Activated CD4-positive, alpha-beta memory T cell treated with anti-CD3 and anti-CD28 coated beads, Interleukin-2, amount 10 ng/mL, durations not matched to agents 7 days and 5 days (primary cell): ENCODE measurements at regions of chr12 and their contacts with region 1.

Region 1: GRCh38 chr12:122336015-122336946 is 70.0 kb upstream of the VPS33A start:
- DNase-seq: peak; percentile 55
- H3K4me3 Mint-ChIP-seq: no peak overlapping the region
- H3K27ac Mint-ChIP-seq: peak overlapping the region; percentile 53
- H3K4me1 Mint-ChIP-seq: peaks cover 18% of the 10 kb centered on the region
- H3K27me3 Mint-ChIP-seq: no peaks in the 10 kb centered on the region

Region 2: GRCh38 chr12:122322501-122322900 is 13.8 kb before region 1 on chr12:
- CTCF ChIA-PET with region 1: interaction called, 21 read pairs
- POLR2A ChIA-PET with region 1: no interaction called
- DNase-seq: no peak
- H3K4me3 Mint-ChIP-seq: no peak overlapping the region
- H3K27ac Mint-ChIP-seq: no peak overlapping the region
- H3K4me1 Mint-ChIP-seq: peaks cover 19% of the 10 kb centered on the region
- H3K27me3 Mint-ChIP-seq: no peaks in the 10 kb centered on the region

Region 3: GRCh38 chr12:122356192-122356635 is 19.9 kb after region 1 on chr12:
- CTCF ChIA-PET with region 1: interaction called, 27 read pairs
- POLR2A ChIA-PET with region 1: no interaction called
- DNase-seq: peak; percentile 60
- H3K4me3 Mint-ChIP-seq: no peak overlapping the region
- H3K27ac Mint-ChIP-seq: no peak overlapping the region
- H3K4me1 Mint-ChIP-seq: peaks cover 7% of the 10 kb centered on the region
- H3K27me3 Mint-ChIP-seq: no peaks in the 10 kb centered on the region

Region 4: DNA sequence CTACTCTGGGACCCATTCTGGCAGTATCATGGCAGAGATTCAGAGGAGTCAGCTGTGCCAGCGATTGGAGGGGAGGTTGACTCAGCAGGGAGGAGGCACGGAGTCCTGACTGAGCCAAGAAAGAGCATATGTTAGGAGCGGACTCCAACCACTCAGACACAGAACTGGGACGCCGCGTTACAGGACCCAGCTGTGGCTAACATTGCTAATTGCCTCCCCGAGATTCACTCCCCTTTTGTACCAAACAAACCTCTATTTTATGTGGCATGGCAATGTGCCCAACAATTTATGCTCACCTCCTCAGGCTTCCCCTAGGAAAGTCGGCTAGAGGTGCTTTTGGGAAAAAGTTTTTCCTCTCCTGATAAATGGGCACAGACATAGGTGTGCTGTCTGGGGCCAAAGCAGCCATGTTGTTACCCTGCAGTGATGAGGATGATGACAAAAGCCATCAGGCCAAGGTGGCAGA is 101.4 kb after region 1 on chr12:
- CTCF ChIA-PET with region 1: no interaction called
- POLR2A ChIA-PET with region 1: no interaction called
- DNase-seq: no peak
- H3K4me3 Mint-ChIP-seq: no peak overlapping the region
- H3K27ac Mint-ChIP-seq: no peak overlapping the region
- H3K4me1 Mint-ChIP-seq: no peaks in the 10 kb centered on the region
- H3K27me3 Mint-ChIP-seq: no peaks in the 10 kb centered on the region

Region 5: GRCh38 chr12:122471324-122472226 is 135.3 kb after region 1 on chr12:
- CTCF ChIA-PET with region 1: interaction called, 17 read pairs
- POLR2A ChIA-PET with region 1: no interaction called
- DNase-seq: no peak
- H3K4me3 Mint-ChIP-seq: no peak overlapping the region
- H3K27ac Mint-ChIP-seq: no peak overlapping the region
- H3K4me1 Mint-ChIP-seq: peaks cover 23% of the 10 kb centered on the region
- H3K27me3 Mint-ChIP-seq: no peaks in the 10 kb centered on the region

Region 6: DNA sequence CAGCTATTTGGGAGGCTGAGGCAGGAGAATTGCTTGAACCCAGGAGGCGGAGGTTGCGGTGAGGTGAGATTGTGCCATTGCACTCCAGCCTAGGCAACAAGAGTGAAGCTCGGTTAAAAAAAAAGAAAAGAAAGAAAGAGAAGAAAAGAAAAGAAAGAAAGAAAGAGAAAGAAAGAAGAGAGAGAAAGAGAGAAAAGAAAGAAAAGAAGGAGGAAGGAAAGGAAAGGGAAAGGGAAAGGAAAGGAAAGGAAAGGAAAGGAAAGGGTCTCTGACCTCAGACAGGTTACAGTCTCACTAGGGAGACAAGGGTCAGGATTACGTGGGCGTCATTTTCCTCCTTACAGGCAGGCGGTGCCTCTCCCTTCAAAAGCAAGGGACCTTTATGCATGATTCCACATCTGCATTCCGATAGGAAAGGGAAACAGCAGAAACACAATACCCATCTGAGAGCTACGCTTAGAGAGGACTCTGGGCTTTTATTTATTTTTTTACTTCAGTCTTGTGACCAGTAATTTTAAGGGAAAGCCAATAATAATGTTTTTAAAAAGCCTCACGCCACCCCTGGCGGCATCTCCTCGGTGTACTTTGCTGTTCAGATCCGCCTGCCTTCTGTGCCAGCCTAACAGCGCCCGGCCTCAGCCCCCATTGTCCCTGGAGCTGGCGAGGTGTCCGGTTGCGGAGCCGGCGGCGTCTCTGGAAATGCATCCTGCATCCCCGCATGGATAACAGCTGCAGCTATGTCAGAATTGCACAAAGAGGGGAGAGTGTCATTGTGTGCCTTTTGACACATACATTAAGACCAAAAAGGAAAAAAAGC is 498.0 kb after region 1 on chr12:
- CTCF ChIA-PET with region 1: no interaction called
- POLR2A ChIA-PET with region 1: no interaction called
- DNase-seq: peak; percentile 24
- H3K4me3 Mint-ChIP-seq: peak overlapping the region; percentile 75
- H3K27ac Mint-ChIP-seq: peak overlapping the region; percentile 8
- H3K4me1 Mint-ChIP-seq: peaks cover 35% of the 10 kb centered on the region
- H3K27me3 Mint-ChIP-seq: peaks cover 17% of the 10 kb centered on the region